Endothelial cell of umbilical vein (primary cell): ENCODE measurements at regions of chr5 and their contacts with region 1.

Region 1: DNA sequence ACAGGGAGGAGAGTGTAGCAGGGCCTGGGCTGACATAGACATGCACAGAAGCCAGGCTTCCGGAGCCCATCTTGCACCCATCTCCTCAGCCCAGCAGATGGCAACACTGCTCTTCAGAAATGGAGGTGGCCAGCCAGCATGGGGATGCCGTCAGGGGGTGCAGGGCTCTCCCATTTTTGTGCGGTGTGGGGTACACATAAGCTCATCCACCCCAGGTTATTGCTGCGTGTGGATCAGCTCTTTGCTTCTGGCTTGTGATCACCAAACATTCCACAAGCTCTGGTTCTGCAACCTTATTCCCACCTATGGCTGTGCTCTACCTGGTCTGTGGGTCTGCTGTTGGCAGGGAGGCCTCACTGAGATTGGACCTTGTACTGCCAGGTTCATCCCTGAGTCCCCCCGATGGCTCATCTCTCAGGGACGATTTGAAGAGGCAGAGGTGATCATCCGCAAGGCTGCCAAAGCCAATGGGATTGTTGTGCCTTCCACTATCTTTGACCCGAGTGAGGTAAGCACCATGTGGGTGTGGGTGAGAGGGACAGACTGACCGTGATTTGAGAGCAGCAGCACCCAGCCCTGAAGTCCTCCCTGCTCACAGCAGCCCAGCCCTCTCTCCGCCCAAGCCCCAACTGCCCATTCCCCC is 17.3 kb downstream of the SLC22A5 start:
- DNase-seq: peak; percentile 77
- H3K4me3 ChIP-seq: no peak overlapping the region
- H3K27ac ChIP-seq: peak overlapping the region; percentile 99
- H3K4me1 ChIP-seq: peaks cover 48% of the 10 kb centered on the region
- H3K27me3 ChIP-seq: no peaks in the 10 kb centered on the region
- CTCF ChIP-seq: peak; percentile 80 to 90
- POLR2A ChIP-seq: no peak

Region 2: DNA sequence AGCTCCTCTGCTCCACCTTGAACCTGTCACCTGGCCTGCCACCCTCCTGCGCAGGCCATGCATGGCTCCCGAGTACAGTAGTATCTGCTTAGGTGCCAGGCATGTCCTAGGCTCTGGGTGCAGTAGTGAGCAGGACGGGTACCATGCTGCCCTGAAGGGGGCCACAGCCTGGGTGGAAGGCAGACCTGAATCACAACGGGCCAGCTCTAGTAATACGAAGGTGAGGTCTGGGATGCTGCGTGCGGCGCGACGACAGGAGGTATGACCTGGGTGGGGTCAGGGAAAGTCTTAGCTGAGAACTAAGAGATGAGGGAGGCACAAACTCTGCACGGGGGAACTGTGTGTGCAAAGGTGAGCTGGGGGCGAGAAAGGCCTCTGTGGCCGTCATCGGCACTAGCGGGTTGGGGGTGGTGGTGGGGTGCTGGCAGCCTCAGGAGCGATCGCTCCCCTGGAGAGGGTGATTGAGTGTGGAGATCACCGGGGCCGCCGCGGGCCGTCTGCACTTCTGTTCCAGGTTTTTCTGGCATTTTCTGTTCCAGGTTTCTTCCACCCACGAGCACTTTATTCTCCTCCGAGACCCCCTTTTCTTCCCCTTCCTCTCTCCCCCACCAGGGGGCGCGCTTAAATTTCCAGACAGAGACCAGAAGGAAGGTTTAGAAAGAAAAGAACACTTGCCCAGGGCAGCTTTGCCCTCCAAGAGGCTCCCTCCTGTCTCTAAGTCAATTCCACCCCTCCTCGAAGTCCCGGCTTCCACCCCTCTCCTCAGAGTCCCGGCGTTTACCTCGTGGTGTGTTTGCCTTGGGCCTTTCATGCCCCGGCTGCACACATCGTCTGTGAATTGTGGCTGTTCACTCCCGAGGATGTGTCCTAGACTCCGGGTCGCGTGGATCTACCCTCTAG is 114.2 kb before region 1 on chr5:
- CTCF ChIA-PET with region 1: no interaction called
- POLR2A ChIA-PET with region 1: no interaction called
- dilution Hi-C with region 1: no loop called
- intact Hi-C with region 1: loop called (anchors 1 kb)
- DNase-seq: peak; percentile 70
- H3K4me3 ChIP-seq: no peak overlapping the region
- H3K27ac ChIP-seq: no peak overlapping the region
- H3K4me1 ChIP-seq: no peaks in the 10 kb centered on the region
- H3K27me3 ChIP-seq: no peaks in the 10 kb centered on the region
- CTCF ChIP-seq: peak; percentile 79 to 81
- POLR2A ChIP-seq: peak; percentile 36

Region 3: DNA sequence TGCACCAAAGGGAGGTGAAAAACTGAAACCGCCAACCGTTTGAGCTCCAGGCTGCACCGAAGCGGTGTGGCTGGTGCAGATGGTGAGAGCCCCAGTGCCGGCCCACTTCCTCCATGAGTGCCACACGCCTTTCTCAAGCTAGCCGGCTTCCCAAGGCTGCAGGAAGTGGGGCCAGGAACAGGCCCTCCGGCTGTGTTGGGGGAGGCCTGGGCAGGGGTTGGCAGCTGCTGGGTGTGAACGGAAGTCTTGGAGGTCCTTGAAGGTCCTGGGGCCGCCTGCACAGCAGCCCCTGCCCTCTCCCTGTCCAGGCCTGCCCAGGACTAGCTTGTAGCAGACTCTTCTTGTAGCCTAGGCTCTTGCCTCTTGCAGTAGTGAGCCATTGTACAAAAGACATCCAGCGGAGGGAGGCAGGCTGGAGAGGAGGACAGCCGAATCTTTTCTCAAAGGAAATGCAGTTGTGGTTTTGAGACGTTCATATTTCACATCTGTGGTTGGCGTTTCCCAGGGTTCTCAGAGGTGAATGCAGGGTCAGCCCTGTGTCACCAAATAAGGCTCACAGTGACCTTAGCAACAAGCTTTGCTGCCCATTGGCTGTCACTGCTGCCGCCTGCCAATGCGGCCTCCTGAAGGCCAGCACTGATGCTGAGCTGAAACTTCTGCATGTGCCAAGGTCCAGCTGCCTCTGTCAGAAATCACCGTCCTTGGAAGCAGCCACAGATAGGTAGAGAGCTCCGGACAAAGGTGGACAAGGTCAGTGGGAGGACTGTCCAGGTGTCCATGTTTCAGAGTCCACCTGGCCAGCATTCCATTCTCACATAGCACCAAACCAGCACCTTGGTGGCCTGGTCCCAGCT is 79.9 kb after region 1 on chr5:
- CTCF ChIA-PET with region 1: interaction called, 8 read pairs
- POLR2A ChIA-PET with region 1: no interaction called
- dilution Hi-C with region 1: no loop called
- intact Hi-C with region 1: loop called (anchors 1 kb)
- DNase-seq: peak; percentile 79
- H3K4me3 ChIP-seq: no peak overlapping the region
- H3K27ac ChIP-seq: no peak overlapping the region
- H3K4me1 ChIP-seq: peaks cover 43% of the 10 kb centered on the region
- H3K27me3 ChIP-seq: no peaks in the 10 kb centered on the region
- CTCF ChIP-seq: no peak
- POLR2A ChIP-seq: no peak

Region 4: GRCh38 chr5:132506094-132506692 is 119.4 kb after region 1 on chr5:
- CTCF ChIA-PET with region 1: interaction called, 220 read pairs
- POLR2A ChIA-PET with region 1: no interaction called
- dilution Hi-C with region 1: no loop called
- intact Hi-C with region 1: loop called (anchors 1 kb)
- DNase-seq: peak; percentile 67
- H3K4me3 ChIP-seq: no peak overlapping the region
- H3K27ac ChIP-seq: no peak overlapping the region
- H3K4me1 ChIP-seq: peaks cover 35% of the 10 kb centered on the region
- H3K27me3 ChIP-seq: no peaks in the 10 kb centered on the region
- CTCF ChIP-seq: peak; percentile 43 to 68
- POLR2A ChIP-seq: no peak

Region 5: DNA sequence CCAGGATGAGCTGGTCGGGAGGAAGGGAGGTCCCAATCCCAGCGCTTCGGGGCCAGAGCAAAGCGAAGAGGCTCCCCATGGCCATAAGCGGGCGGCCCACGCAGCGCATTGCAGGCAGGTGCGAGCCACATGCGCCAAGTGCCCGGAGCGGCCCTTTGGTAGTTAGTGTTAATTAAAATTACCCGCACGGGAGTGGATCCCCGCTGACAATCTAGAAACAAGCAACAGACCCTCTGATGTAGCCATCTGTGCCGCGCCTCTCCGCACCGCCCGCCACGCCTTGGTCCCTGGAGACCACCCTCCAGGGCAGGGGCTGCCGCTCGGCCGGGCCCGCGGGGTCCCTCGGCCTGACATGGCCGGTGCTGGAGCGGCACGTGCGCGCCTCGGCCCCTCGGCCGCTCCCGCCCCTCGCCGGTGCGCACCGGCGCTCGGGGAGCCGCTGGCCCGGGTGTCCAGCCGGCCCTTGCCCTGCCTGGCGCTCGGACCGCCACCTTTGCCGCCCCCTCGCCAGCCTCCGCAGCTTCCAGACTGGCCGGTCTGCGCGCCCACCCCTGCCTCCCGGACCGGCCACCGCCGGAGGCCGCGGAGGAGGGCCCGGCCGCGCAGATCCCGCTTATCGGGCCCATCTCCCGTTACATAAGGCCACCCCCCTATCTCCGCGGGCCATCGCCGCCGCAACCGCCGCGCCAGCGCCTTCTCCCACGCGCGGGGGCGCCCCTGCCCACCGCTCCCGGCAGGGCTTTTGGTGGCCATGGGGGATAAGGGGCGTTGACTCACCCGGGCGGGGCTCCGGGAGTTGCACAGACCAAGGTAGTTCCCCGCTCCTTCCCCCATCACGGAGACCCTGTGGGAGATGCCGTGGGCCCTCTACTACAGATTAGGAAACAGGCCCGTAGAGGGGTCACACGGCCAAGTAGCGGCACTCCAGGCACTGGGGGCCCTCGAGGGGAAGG is 269.3 kb after region 1 on chr5:
- CTCF ChIA-PET with region 1: no interaction called
- POLR2A ChIA-PET with region 1: no interaction called
- dilution Hi-C with region 1: no loop called
- intact Hi-C with region 1: loop called (anchors 5 kb)
- DNase-seq: peak; percentile 13
- H3K4me3 ChIP-seq: peak overlapping the region in 2 of 3 experiments; percentile 32 to 43
- H3K27ac ChIP-seq: no peak overlapping the region
- H3K4me1 ChIP-seq: peaks cover 9% of the 10 kb centered on the region
- H3K27me3 ChIP-seq: peaks cover 4 to 8% of the 10 kb centered on the region in 2 experiments
- CTCF ChIP-seq: no peak
- POLR2A ChIP-seq: no peak

Region 6: DNA sequence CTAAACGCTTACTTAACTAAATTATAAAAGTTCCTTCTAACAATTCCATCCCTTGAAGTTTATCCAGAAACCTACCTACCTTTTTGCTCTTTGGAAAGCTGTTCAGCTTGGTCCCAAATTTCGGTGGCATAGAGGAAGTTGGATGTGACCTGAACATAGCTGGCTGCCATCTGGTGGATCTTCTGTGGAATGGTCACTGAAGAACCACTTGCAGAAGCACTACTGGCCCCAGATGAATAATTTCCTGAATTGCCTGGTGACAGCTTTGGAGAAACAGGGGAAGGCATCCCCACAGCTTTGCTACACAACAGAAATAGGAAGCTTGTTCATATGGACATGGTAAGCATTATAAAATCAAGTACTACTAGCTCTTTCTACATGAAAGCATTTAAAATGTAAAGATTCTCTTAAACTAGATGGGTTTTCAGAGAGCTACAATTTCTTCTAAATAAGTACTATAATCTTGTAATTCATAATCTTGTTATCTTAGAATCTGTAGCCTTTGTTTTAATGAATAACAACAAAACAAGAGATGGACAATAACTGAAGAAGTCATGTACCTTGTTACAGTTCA is 496.6 kb after region 1 on chr5:
- CTCF ChIA-PET with region 1: interaction called, 14 read pairs
- POLR2A ChIA-PET with region 1: no interaction called
- dilution Hi-C with region 1: no loop called
- intact Hi-C with region 1: loop called (anchors 1 kb)
- DNase-seq: peak; percentile 82
- H3K4me3 ChIP-seq: no peak overlapping the region
- H3K27ac ChIP-seq: no peak overlapping the region
- H3K4me1 ChIP-seq: peaks cover 6% of the 10 kb centered on the region
- H3K27me3 ChIP-seq: no peaks in the 10 kb centered on the region
- CTCF ChIP-seq: peak; percentile 66 to 69
- POLR2A ChIP-seq: no peak